Spleen (tissue), 13 donors: ENCODE measurements at regions of chr3 and their contacts with region 1.

Region 1: DNA sequence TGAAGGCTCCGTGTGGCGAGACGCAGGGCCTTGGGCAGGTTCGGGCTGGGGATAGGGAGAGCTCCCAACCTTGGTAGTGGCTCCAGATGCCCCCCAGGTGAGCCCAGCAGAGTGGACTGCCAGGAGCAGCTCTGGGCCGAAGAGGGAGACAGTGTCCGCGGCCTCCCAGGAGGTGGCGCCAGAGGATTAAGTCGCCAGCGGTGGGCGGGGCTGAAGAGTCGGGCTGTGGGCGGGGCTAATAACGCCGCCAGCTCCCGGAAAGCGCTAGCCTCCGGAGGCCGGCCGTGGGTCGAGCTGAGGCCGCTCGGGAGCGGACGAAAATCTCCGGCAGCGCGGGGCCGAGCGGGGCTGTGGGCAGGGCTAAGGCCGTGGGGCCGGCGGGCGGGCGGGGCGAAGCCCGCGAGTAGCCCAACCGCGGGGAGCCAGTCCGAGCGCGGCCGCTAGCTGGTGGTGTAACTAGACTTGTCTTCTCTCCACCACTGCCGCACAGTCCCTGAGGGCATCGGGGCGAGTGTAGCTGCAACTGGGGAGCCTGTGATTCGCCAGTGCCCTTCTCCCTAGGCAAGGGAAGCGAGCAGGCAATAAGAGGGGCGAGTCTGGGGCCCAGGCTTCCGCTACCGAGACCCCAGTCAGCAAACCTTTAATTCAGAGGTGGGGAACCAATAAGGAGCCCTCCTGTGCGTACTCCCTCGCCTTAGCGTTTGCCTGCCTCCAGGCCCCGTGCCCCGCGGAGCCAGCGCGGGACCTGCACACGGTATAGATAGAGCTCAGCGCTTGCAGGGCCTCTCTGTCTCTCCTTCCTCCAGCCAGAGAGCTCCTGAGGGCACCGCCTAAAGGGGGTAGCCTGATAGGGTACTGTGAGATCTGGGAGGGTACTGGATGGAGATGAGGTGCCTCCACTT is 14.4 kb upstream of the BSN start:
- DNase-seq: peak; percentile 98
- H3K4me3 ChIP-seq: peak overlapping the region; percentile 40 to 73 (median 48)
- H3K27ac ChIP-seq: peak overlapping the region; percentile 74 to 89 (median 84)
- H3K4me1 ChIP-seq: peaks cover 3 to 21% (median 11%) of the 10 kb centered on the region in 6 donors
- H3K27me3 ChIP-seq: peaks cover 0 to 3% (median 0%) of the 10 kb centered on the region in 7 donors
- CTCF ChIP-seq: peak; percentile 88 to 97 (median 93)
- POLR2A ChIP-seq: peak in 1 of 3 donors; percentile 13

Region 2: DNA sequence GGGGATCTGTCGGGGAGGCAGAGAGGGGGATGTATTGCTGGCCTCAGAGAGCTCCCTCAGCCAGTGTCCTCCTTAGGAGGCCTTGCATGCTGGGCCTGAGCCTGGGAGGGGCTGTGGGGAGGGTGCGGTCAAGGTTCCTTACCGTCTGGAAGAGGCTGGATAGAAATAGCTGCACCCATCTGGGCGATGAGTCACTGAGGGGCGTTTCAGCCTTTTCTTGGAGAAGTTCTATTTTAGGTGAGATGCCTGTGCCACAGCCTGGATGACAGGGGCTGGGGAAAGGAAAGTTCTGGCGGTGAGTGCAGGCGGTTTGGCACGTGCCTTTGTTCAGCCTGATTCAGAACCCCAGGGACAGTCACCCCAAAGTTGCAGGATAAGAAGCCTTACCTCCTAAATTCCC is 98.5 kb after region 1 on chr3:
- intact Hi-C with region 1: no loop called
- DNase-seq: no peak
- H3K4me3 ChIP-seq: no peak overlapping the region
- H3K27ac ChIP-seq: no peak overlapping the region
- H3K4me1 ChIP-seq: no peaks in the 10 kb centered on the region
- H3K27me3 ChIP-seq: no peaks in the 10 kb centered on the region
- CTCF ChIP-seq: no peak
- POLR2A ChIP-seq: no peak

Region 3: DNA sequence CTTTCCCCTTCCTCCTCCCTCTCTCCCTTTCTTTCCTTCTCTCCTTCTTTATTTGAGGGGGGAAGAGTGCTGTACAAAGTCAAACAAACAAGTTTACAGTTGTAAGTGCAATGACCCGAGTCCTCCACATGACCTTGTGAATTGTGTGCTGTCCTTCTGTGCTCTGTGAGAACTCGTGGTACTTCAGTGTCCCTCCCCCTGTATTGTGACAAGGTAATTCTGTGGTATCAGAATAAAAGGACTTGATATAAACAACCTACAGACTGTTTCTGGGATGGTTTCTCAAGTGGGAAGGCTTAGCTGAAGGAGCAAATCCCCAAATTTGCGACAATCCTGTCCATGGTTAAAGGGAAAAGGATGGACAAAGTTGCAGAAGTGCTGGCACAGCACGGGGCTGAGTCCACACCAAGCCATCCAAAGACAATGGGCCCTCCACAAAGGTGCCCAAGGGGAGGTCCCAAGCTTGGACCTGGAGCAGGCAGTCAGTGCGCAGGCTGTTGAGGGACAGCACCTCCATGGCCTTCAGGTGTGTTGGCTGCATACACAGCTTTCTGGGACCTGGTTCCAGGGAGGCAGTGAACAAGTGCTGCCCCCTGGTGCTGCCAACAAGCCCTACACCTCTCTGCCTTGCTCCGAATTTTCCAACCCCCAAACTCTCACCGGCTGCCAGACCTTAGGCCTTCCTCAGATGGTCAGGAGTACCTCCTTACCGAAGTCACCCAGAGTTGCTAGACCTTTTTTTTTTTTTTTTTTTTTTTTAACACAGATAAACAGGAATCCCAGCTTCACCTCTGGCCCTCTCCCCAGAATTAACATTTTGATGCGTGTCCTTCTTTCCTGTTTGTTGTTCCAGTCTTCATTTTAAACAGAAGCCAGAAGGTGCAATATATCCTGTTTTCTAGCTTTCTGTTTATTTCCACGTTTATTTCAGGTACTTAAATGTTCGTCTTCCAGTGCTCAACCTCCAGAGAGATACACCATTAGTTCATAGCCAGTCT is 131.7 kb after region 1 on chr3:
- intact Hi-C with region 1: loop called (anchors 2 kb)
- DNase-seq: peak; percentile 88
- H3K4me3 ChIP-seq: no peak overlapping the region
- H3K27ac ChIP-seq: no peak overlapping the region
- H3K4me1 ChIP-seq: peaks cover 10 to 44% (median 24%) of the 10 kb centered on the region in 6 donors
- H3K27me3 ChIP-seq: peaks cover 0 to 6% (median 0%) of the 10 kb centered on the region in 7 donors
- CTCF ChIP-seq: peak; percentile 71 to 88 (median 84)
- POLR2A ChIP-seq: no peak